A673 (cell line): ENCODE measurements at regions of chr15 and their contacts with region 1.

Region 1: GRCh38 chr15:44009056-44009455 is 182.3 kb downstream of the WDR76 start:
- DNase-seq: no peak
- H3K4me3 ChIP-seq: no peak overlapping the region
- H3K27ac ChIP-seq: no peak overlapping the region
- H3K4me1 ChIP-seq: no peaks in the 10 kb centered on the region
- H3K27me3 ChIP-seq: no peaks in the 10 kb centered on the region
- CTCF ChIP-seq: no peak

Region 2: DNA sequence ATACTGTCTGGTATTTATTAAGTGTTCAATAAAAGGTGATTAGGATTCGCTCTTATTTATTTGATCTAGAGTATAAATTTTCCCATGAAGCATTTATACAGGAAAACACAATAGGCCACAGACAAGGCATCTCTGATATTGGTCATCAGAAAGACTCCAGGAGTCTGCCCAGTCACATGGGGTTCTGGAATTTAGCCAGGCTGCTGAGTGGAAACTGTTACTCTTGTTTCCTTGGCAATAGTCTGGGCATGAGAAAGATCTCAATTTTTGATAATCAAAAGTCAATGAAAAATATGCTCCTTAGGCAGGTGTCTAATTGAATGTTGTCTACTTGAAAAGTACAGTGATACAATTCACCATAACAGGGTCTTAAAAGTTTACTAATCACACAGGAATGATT is 24.8 kb after region 1 on chr15:
- CTCF ChIA-PET with region 1: no interaction called
- POLR2A ChIA-PET with region 1: no interaction called
- intact Hi-C with region 1: no loop called
- DNase-seq: no peak
- H3K4me3 ChIP-seq: no peak overlapping the region
- H3K27ac ChIP-seq: no peak overlapping the region
- H3K4me1 ChIP-seq: peaks cover 7% of the 10 kb centered on the region
- H3K27me3 ChIP-seq: no peaks in the 10 kb centered on the region
- CTCF ChIP-seq: no peak

Region 3: GRCh38 chr15:44128443-44128842 is 119.4 kb after region 1 on chr15:
- CTCF ChIA-PET with region 1: no interaction called
- POLR2A ChIA-PET with region 1: interaction called, 11 read pairs
- intact Hi-C with region 1: no loop called
- DNase-seq: no peak
- H3K4me3 ChIP-seq: no peak overlapping the region
- H3K27ac ChIP-seq: no peak overlapping the region
- H3K4me1 ChIP-seq: no peaks in the 10 kb centered on the region
- H3K27me3 ChIP-seq: no peaks in the 10 kb centered on the region
- CTCF ChIP-seq: no peak

Region 4: GRCh38 chr15:44157685-44158099 is 148.6 kb after region 1 on chr15:
- CTCF ChIA-PET with region 1: no interaction called
- POLR2A ChIA-PET with region 1: no interaction called
- intact Hi-C with region 1: no loop called
- DNase-seq: peak; percentile 47
- H3K4me3 ChIP-seq: no peak overlapping the region
- H3K27ac ChIP-seq: no peak overlapping the region
- H3K4me1 ChIP-seq: no peaks in the 10 kb centered on the region
- H3K27me3 ChIP-seq: no peaks in the 10 kb centered on the region
- CTCF ChIP-seq: no peak